ENCODE measurements at regions of chr20 and their contacts with region 1.

Region 1: DNA sequence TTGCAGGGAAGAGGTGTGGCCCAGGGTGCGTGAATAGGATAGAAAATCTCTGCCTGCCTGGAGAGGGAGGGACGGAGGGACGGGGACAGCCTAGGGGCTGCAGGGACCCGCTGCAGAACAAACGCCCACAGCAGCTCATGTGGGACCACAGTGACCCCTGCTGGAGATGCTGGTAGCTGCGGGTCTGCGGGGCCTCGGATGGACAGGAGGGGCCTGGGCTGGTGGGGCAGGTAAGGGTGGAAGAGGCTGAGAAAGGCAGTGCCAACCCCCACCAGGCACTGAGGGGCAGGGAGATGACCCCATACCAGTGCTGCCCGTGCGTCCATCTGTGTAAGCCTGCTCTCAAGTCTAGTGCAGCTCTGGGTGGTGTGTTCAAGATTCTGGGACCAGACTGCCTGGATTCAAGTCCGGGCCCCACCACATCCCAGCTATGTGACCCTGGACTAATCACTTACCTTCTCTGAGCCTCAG is 39.4 kb downstream of the KIAA1755 start:
- DNase-seq: peak; percentile 67
- H3K4me3 ChIP-seq: no peak overlapping the region
- H3K27ac ChIP-seq: peak overlapping the region; percentile 12
- H3K4me1 ChIP-seq: peaks cover 7% of the 10 kb centered on the region
- H3K27me3 ChIP-seq: no peaks in the 10 kb centered on the region
- CTCF ChIP-seq: peak; percentile 94

Region 2: DNA sequence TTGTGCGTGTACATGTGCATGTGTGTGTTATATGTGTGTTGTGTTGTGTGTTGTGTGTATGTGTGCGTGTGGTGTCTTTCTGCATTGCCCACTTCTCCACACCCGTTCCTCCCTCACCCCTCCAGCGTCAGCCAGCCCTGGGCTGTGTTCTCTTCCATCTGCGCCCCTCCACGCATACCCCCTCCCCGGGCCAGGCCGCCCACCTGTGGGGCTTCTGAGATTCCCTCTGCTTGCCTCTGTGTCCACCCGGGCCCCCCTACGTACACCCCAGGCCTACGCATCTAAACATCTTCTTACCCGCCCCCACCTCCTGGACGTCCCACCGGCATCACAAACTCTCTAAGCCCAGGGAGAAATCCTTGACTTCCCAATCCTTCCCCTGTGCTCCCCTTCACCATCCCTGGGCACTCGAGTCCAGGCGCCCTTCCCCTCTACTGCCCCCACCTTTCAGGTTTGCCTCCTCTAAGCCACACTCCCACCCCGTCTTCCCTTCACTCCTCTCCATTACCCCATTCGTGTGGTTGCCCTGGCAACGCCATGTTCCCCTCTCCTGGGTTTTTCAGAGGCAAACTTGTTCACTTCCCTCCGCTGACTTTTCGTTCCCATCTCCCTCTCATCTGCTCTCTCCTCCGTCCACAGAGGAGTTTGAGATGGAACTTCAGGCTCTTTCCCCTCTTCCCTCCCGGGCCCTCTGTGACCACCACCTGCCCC is 781.8 kb before region 1 on chr20:
- intact Hi-C with region 1: no loop called
- DNase-seq: no peak
- H3K4me3 ChIP-seq: no peak overlapping the region
- H3K27ac ChIP-seq: no peak overlapping the region
- H3K4me1 ChIP-seq: no peaks in the 10 kb centered on the region
- H3K27me3 ChIP-seq: peaks cover 38% of the 10 kb centered on the region
- CTCF ChIP-seq: no peak

Region 3: DNA sequence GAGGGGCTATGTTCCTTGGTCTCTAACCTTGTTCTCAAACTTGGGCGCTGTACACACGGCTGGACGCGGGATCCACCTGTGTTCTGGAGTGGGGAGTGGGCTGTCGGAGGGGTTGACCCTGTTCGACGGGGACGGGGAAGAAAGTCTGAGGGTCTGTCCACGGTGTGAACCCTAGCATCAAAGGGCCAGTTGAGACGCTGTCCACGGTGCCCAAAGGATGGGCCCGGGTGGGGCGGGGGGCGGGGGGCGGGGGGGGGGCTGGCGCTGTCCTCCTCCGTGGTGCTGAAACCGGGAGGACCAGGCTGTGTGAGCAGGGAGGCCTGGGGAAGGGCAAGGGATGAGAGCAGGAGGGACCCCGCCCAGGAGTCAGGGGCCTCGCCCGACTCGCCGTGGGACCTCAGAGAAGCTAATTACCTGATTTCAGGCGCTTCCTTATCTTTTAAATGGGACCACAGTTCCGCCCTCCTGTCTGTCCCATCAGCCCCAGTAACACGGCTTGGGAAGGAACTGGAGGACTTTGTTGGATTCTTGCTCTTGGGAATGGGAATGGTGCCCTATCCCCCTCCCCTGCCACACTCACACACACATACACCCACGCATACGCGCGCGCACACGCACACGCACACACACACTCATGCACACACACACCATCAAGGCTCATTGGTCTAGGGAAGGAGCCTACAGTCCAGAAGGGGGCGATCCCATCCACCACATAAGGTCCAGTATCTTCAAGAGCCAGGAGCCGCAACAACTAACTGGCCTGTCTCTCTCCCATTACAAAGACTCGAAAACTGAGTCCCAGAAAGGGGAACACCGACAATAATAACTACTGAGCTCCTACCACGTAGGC is 319.3 kb before region 1 on chr20:
- intact Hi-C with region 1: no loop called
- DNase-seq: no peak
- H3K4me3 ChIP-seq: peak overlapping the region; percentile 64
- H3K27ac ChIP-seq: no peak overlapping the region
- H3K4me1 ChIP-seq: peaks cover 35% of the 10 kb centered on the region
- H3K27me3 ChIP-seq: peaks cover 96% of the 10 kb centered on the region
- CTCF ChIP-seq: peak; percentile 47

Region 4: DNA sequence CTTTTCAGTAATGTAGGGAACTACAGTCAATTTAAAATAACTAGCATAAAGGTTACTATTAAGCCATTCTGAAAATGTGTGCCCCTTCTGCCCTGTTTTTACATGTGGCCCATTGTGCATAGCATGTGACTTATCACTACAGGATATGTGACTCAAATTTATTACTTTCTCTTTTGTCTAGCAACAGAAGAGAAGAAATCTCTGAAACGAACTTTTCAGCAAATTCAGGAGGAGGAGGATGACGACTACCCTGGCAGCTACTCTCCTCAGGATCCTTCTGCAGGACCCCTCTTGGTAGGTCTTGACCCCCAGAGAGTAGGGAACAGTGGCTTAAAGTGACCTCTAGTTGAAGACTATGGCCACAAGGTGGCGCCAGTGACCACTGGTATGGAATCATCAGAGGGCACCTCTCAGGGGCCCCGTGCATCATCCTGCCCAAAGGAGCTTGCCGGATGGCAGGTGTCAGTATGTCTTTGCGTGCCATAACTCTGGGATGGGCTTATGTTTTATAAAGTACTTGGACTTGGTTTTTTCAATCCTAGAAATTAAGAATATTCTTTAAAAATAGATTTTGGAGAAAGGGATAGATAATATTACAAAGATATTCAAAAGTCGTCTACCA is 163.7 kb before region 1 on chr20:
- intact Hi-C with region 1: loop called (anchors 5 kb)
- DNase-seq: peak; percentile 86
- H3K4me3 ChIP-seq: no peak overlapping the region
- H3K27ac ChIP-seq: no peak overlapping the region
- H3K4me1 ChIP-seq: peaks cover 42% of the 10 kb centered on the region
- H3K27me3 ChIP-seq: no peaks in the 10 kb centered on the region
- CTCF ChIP-seq: peak; percentile 89

Region 5: DNA sequence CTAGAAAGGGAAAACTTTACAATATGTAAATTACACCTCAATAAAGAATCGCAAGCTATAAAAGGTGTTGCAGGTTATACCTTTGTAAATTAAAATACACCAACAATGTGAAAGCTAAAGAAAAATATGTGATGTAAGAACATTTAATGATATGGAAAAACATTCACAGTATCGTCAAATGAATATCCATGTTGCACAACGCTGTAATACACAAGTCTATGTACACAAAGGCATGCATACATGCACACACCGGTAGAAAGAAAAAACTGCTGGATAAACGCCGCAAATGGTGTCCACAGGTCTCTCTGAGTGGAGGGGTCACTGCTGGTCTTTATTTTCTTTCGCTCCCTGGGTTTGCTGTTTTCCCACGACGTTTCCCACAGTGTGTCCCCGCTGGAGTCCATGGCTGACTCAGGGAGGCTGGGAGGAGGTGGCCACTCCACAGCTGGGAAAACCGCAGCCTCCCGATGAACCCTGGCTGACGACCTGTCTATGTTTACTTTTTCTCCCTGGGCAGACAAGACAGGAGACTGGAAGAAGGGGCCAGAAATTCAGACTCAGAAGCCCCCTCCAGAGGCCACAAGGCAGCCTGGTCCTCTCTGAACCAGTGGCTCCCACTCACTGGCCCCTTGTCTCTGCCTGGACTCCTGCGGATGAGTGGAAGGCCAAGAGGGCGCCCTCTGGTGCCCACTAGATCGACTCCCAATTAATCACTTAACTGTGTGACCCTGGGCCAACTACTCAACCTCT is 69.9 kb after region 1 on chr20:
- intact Hi-C with region 1: no loop called
- DNase-seq: peak; percentile 50
- H3K4me3 ChIP-seq: no peak overlapping the region
- H3K27ac ChIP-seq: no peak overlapping the region
- H3K4me1 ChIP-seq: no peaks in the 10 kb centered on the region
- H3K27me3 ChIP-seq: peaks cover 20% of the 10 kb centered on the region
- CTCF ChIP-seq: peak; percentile 56